ENCODE measurements at regions of chr6 and their contacts with region 1.

Region 1: GRCh38 chr6:139028658-139029469 is at the start of gene ABRACL:
- DNase-seq: peak; percentile 62
- H3K4me3 Mint-ChIP-seq: no peak within 1 kb of the TSS
- H3K27ac Mint-ChIP-seq: peak within 1 kb of the TSS; percentile 87
- H3K4me1 Mint-ChIP-seq: peaks cover 22% of the 10 kb centered on the region
- H3K27me3 Mint-ChIP-seq: no peaks in the 10 kb centered on the region
- CTCF ChIP-seq: no peak
- total RNA-seq, gene ABRACL: 36.1 and 40.4 TPM in 2 replicates

Region 2: DNA sequence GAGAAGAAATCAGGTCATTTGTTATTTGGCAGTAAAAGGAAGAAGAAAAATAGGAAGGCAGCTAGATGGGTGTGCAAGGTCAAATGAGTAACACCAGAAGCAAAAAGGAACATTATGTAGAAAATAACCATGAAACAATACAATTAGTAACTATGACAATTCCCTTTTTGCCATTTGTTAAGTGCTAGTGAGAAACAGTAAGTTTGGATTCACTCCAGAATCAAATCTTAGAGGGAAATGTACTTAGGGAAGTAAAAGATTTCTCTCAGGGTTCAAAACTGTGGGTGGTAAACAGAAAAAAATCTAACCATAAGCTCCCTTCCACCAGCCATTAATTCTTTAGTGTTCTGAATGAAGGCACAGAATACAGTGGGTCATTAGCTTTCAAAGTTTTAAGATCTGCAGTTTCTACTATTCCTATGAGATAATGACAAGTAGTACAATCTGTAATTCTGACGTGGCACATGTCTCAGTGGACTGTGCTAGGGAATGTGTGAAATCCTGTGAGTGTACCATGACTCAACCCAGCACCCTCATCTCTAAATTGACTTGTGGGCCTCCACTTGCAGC is 57.9 kb before region 1 on chr6:
- CTCF ChIA-PET with region 1: no interaction called
- intact Hi-C with region 1: no loop called
- DNase-seq: no peak
- H3K4me3 Mint-ChIP-seq: no peak overlapping the region
- H3K27ac Mint-ChIP-seq: peak overlapping the region; percentile 2
- H3K4me1 Mint-ChIP-seq: peaks cover 44% of the 10 kb centered on the region
- H3K27me3 Mint-ChIP-seq: no peaks in the 10 kb centered on the region
- CTCF ChIP-seq: no peak

Region 3: DNA sequence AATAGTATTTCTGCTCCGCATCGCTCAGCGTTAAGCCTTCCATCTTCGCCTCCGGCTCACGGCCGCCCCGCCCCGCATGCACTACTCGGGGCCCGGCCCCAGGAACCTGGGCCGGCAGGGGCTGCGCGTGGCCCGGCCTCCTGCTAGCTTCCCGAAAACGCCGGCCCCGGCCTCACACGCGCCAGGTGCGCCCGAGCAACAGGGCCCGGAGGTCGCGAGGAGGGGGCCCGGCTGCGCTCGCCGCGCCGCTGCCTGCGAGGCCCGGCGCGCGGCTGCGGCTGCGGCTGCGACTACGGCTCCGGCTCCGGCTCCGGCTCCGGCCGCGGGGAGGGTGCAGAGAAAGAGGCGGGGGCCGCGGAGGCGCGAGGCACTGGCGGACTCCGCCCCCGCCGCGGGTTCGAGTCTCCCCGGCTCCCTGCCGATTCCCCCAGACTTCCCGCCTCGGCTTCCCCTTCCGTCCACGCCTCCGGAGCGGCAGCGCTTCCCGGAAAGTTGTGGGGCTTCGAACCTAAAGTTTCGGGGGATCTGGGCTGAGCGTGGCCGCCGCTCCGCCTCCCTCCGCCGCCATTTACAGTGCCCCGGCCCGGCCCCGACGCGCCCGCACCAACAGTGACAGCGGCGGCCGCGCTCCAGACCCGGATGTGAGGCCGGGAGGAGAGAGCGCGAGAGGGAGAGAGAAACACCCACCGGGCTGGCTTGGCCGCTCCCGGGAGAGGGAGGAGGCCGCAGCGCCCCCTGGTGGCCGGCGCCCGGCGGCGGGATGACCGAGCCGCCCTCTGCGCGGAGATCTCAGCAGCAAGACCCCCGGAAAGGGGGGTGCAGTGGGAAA is 41.0 kb before region 1 on chr6 and contains the start of gene REPS1:
- CTCF ChIA-PET with region 1: no interaction called
- intact Hi-C with region 1: loop called (anchors 5 kb)
- DNase-seq: peak; percentile 89
- H3K4me3 Mint-ChIP-seq: peak within 1 kb of the TSS; percentile 79
- H3K27ac Mint-ChIP-seq: peak within 1 kb of the TSS; percentile 60
- H3K4me1 Mint-ChIP-seq: no peaks in the 10 kb centered on the region
- H3K27me3 Mint-ChIP-seq: no peaks in the 10 kb centered on the region
- CTCF ChIP-seq: peak; percentile 84
- total RNA-seq, gene REPS1: 24.1 and 29.5 TPM in 2 replicates

Measured in Calu3 (cell line).